ENCODE measurements at regions of chr1 and their contacts with region 1.

Region 1: GRCh38 chr1:41795205-41795762 is 123.4 kb downstream of the HIVEP3 start:
- DNase-seq: no peak
- H3K4me3 Mint-ChIP-seq: no peak overlapping the region
- H3K27ac Mint-ChIP-seq: no peak overlapping the region
- H3K4me1 Mint-ChIP-seq: peaks cover 54% of the 10 kb centered on the region
- H3K27me3 Mint-ChIP-seq: no peaks in the 10 kb centered on the region

Region 2: DNA sequence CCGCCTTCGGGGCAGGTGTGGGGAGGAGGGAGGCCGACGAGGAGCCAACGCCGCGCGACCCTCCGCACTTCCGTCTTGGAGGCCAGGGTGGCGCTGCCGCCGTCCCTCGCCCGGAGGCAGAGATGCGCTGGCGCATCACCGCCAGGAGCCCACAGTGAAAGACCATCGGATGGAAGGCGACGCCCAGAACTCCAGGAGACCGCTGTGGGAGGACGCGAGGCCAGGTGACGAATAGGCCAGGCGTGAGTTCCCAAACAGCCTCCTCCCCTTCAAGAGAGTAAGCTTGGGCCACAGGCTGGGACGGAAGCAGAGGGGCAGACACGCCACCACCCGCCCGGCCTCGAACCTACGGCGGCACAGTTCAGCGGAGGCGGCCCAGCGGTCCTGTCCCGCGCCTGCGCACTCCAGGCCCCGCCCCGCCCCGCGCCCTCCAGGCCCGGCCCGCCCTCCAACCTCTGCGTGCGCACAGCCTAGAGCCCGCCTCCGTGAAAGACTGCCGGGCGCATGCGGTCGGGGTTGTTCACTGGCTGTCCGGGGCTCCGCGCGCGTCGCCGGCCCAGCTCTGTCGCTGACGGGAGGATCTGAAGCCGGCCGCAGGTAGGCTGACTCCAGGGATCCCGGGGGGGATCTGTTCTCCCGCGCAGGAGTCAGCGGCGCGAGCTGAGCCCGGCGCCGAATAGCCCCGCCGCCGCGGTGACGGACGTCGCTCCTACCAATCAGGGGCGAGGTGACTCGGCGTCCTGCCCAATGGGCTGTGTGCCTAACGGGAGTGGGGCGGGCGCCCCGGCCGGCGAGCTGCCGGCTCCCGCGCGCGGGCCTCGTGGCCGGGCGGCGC is 815.8 kb before region 1 on chr1 and contains the start of gene CTPS1:
- CTCF ChIA-PET with region 1: no interaction called
- intact Hi-C with region 1: loop called (anchors 10 kb)
- DNase-seq: peak; percentile 96
- H3K4me3 Mint-ChIP-seq: peak within 1 kb of the TSS; percentile 82
- H3K27ac Mint-ChIP-seq: peak within 1 kb of the TSS; percentile 84
- H3K4me1 Mint-ChIP-seq: peaks cover 40% of the 10 kb centered on the region
- H3K27me3 Mint-ChIP-seq: no peaks in the 10 kb centered on the region
- total RNA-seq, gene CTPS1: 74.9 to 75.1 TPM

Region 3: DNA sequence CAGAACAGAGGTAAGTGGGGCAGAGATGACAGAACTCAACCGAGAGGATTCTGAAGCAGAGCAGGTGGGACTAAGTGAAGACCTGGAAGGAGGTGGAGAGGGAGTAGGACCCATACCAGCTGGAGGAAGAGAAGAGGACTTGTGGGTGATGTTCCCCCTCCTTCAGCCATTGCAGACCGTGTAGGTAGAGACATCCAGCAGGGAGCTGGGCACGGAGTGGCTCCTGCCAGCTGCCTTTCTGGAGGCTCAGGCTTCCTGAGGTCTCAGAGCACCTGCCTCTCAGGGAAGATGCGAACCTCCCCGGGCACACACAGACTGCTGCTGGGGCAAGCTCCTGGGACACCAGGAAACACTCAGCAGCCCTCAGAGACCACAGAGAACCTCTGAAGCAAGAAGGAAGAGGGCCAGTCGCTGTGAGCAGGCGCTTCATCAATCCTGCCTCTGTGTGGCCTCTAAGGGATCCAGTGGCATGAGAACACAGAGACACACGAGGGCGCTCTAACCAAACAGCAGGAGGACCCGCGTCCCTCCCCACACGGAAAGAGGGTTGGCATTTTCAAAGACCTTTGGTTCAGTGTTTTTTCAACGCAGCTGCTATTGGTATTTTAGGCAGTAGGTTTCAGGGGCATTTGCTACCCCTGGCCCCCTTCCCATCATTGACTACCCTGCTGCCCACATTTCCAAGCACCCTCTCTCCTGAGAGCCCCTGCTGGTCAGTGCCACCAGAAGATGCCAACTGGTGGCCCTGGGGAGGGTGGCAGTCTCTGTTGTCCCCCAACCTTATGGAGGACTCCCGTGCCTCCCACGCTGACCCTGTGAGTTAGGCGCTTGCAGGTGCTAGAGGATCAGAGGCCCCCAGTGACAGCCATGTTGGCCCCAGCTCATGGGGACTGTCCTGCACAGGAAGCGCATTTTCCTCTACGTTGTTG is 221.2 kb before region 1 on chr1:
- CTCF ChIA-PET with region 1: no interaction called
- intact Hi-C with region 1: loop called (anchors 1 kb)
- DNase-seq: peak; percentile 92
- H3K4me3 Mint-ChIP-seq: no peak overlapping the region
- H3K27ac Mint-ChIP-seq: peak overlapping the region; percentile 20
- H3K4me1 Mint-ChIP-seq: peaks cover 42% of the 10 kb centered on the region
- H3K27me3 Mint-ChIP-seq: no peaks in the 10 kb centered on the region

Region 4: GRCh38 chr1:41739061-41739955 is 56.0 kb before region 1 on chr1:
- CTCF ChIA-PET with region 1: interaction called, 3 read pairs
- intact Hi-C with region 1: loop called (anchors 1 kb)
- DNase-seq: peak; percentile 96
- H3K4me3 Mint-ChIP-seq: peak overlapping the region; percentile 73
- H3K27ac Mint-ChIP-seq: peak overlapping the region; percentile 98
- H3K4me1 Mint-ChIP-seq: peaks cover 93% of the 10 kb centered on the region
- H3K27me3 Mint-ChIP-seq: no peaks in the 10 kb centered on the region

Region 5: GRCh38 chr1:41783189-41783639 is 12.1 kb before region 1 on chr1:
- CTCF ChIA-PET with region 1: no interaction called
- intact Hi-C with region 1: loop called (anchors 1 kb)
- DNase-seq: peak; percentile 66
- H3K4me3 Mint-ChIP-seq: no peak overlapping the region
- H3K27ac Mint-ChIP-seq: peak overlapping the region; percentile 28
- H3K4me1 Mint-ChIP-seq: peaks cover 27% of the 10 kb centered on the region
- H3K27me3 Mint-ChIP-seq: no peaks in the 10 kb centered on the region

Region 6: GRCh38 chr1:41806472-41807155 is 11.3 kb after region 1 on chr1:
- CTCF ChIA-PET with region 1: interaction called, 4 read pairs
- intact Hi-C with region 1: loop called (anchors 2 kb)
- DNase-seq: peak; percentile 71
- H3K4me3 Mint-ChIP-seq: peak overlapping the region; percentile 31
- H3K27ac Mint-ChIP-seq: peak overlapping the region; percentile 86
- H3K4me1 Mint-ChIP-seq: peaks cover 89% of the 10 kb centered on the region
- H3K27me3 Mint-ChIP-seq: no peaks in the 10 kb centered on the region